Heart right ventricle (tissue), 16 donors: ENCODE measurements at regions of chr2 and their contacts with region 1.

Region 1: DNA sequence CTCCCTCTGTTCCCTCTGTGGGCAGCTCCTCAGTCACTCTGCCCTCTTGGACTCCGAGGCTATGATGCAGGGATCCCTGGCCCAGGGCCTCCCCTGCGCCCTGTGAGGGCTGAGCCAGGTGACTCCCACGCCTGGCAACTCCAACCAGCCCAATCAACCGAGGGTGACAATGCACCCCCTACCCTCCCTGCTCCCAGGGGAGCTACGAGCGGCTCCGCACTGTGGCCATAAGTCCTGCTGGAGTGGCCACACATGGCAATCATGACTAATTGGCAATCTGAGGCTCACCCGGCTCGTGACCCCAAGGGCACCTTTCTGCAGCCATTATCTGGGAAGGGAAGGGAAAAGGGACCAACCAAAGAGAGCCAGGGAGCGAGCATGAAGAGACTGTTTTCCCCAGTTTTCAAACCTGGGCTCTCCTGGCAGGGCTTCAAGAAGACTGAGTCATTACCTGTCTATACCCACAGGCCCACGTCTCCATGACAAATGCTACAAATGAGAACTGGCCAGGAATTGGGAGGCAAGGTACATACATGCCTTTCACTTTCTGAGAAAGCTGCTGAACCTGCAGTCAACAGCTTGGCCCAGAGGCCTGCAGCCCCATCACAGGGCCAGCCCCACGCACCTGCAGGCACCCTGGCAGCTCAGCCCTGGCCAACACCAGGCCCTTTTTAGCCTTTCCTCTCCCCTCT is 45.1 kb downstream of the RPL31 start:
- DNase-seq: no peak
- ATAC-seq: peak in 6 of 8 donors; percentile 26 to 63 (median 44)
- H3K4me3 ChIP-seq: no peak overlapping the region
- H3K27ac ChIP-seq: peak overlapping the region in 6 of 10 donors; percentile 2 to 59 (median 42)
- H3K4me1 ChIP-seq: peaks cover 0 to 35% (median 18%) of the 10 kb centered on the region in 9 donors
- H3K27me3 ChIP-seq: no peaks in the 10 kb centered on the region
- CTCF ChIP-seq: no peak

Region 2: GRCh38 chr2:101105654-101106053 is 58.4 kb after region 1 on chr2:
- intact Hi-C with region 1: no loop called
- DNase-seq: no peak
- ATAC-seq: no peak
- H3K4me3 ChIP-seq: no peak overlapping the region
- H3K27ac ChIP-seq: peak overlapping the region in 3 of 10 donors; percentile 87 to 93 (median 91)
- H3K4me1 ChIP-seq: peaks cover 12 to 65% (median 43%) of the 10 kb centered on the region in 9 donors
- H3K27me3 ChIP-seq: no peaks in the 10 kb centered on the region
- CTCF ChIP-seq: no peak

Region 3: GRCh38 chr2:101120172-101120996 is 73.2 kb after region 1 on chr2:
- intact Hi-C with region 1: no loop called
- DNase-seq: peak; percentile 57 to 79
- ATAC-seq: peak; percentile 74 to 95 (median 89)
- H3K4me3 ChIP-seq: no peak overlapping the region
- H3K27ac ChIP-seq: peak overlapping the region; percentile 50 to 93 (median 83)
- H3K4me1 ChIP-seq: peaks cover 15 to 86% (median 65%) of the 10 kb centered on the region in 9 donors
- H3K27me3 ChIP-seq: no peaks in the 10 kb centered on the region
- CTCF ChIP-seq: no peak

Region 4: GRCh38 chr2:101135412-101136296 is 88.4 kb after region 1 on chr2:
- intact Hi-C with region 1: loop called in 1 of 10 experiments (anchors 5 kb)
- DNase-seq: no peak
- ATAC-seq: peak in 1 of 8 donors; percentile 32
- H3K4me3 ChIP-seq: no peak overlapping the region
- H3K27ac ChIP-seq: no peak overlapping the region
- H3K4me1 ChIP-seq: peaks cover 2 to 41% (median 15%) of the 10 kb centered on the region in 9 donors
- H3K27me3 ChIP-seq: no peaks in the 10 kb centered on the region
- CTCF ChIP-seq: no peak